Panc1 (cell line): ENCODE measurements at regions of chr4 and their contacts with region 1.

Region 1: GRCh38 chr4:145822581-145822980 is 116.0 kb downstream of the ZNF827 start:
- DNase-seq: no peak
- ATAC-seq: no peak
- H3K4me3 ChIP-seq: no peak overlapping the region
- H3K27ac ChIP-seq: no peak overlapping the region
- H3K4me1 ChIP-seq: no peaks in the 10 kb centered on the region
- H3K27me3 ChIP-seq: no peaks in the 10 kb centered on the region
- CTCF ChIP-seq: no peak

Region 2: DNA sequence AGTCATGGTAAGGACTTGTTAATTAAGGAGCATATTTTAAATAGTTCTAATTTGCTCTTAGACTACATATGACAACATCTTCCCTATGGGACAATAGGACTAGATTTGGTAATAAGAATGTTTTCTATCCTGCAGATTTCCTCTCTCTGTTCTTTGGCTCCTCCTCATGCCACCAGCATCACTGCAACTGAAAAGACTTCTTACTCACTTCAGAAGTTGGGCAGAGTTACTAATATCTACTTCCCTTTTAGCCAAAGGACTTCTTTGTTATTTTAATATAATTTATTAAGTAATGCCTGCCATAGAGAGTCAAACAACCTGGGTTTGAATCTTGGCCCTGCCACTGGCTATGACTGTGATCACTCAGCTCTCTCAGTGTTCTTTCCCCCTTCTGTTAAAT is 187.0 kb before region 1 on chr4:
- CTCF ChIA-PET with region 1: no interaction called
- POLR2A ChIA-PET with region 1: interaction called, 22 read pairs
- in situ Hi-C with region 1: no loop called
- intact Hi-C with region 1: no loop called
- DNase-seq: no peak
- ATAC-seq: no peak
- H3K4me3 ChIP-seq: no peak overlapping the region
- H3K27ac ChIP-seq: no peak overlapping the region
- H3K4me1 ChIP-seq: no peaks in the 10 kb centered on the region
- H3K27me3 ChIP-seq: no peaks in the 10 kb centered on the region
- CTCF ChIP-seq: no peak